ENCODE measurements at regions of chr5 and their contacts with region 1.

Region 1: GRCh38 chr5:160133071-160133917 is 14.0 kb upstream of the PWWP2A start:
- DNase-seq: peak in 1 of 2 donors; percentile 68
- H3K4me3 ChIP-seq: peak overlapping the region; percentile 22 to 26
- H3K27ac ChIP-seq: peak overlapping the region; percentile 72 to 81
- H3K4me1 ChIP-seq: peaks cover 0 to 13% of the 10 kb centered on the region in 2 donors
- H3K27me3 ChIP-seq: no peaks in the 10 kb centered on the region
- CTCF ChIP-seq: no peak

Region 2: GRCh38 chr5:160165137-160166068 is 32.1 kb after region 1 on chr5:
- intact Hi-C with region 1: loop called (anchors 5 kb)
- DNase-seq: peak; percentile 78 to 96
- H3K4me3 ChIP-seq: peak overlapping the region in 1 of 2 donors; percentile 43
- H3K27ac ChIP-seq: peak overlapping the region; percentile 88 to 92
- H3K4me1 ChIP-seq: peaks cover 9 to 27% of the 10 kb centered on the region in 2 donors
- H3K27me3 ChIP-seq: no peaks in the 10 kb centered on the region
- CTCF ChIP-seq: no peak

Measured in ascending aorta (tissue), 2 donors.